ENCODE measurements at regions of chr6 and their contacts with region 1.

Region 1: DNA sequence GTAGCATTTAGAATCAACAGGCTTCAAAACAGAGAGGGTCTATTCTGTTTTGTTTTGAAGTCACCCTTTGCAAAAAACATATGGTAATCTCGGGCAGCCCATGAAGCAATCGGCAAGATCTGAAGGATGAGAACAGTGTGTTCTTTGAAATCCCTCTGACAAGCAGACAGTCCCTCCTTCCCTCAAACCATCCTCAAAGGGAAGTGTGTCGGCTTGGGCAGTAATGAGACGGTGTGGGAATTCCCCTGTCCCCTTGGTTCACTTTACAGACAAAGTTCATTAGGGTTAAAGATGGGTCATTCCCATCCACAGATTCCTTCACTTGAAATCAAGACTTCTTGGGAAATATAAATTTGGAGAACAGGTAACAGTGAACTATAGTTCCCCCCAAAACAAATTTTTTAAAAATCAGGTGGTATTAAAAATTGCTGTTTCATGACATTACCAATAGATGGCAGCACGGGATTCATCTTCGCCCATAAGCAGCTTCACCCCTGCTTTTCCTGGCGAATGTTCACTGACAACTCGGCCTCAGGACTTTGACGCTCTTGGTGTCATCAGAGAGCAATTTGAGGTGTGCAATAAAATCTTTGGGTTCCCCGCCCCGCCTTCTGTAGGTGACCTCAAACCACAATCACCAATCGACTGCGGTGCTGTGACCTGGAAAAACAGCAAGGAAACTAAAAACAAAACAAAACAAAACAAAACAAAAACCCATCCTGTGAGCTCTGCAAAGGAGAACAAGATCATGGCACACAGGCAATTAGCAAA is 159.3 kb upstream of the TNFAIP3 start:
- DNase-seq: no peak
- ATAC-seq: peak; percentile 86
- H3K4me3 ChIP-seq: peak overlapping the region; percentile 31
- H3K27ac ChIP-seq: peak overlapping the region; percentile 32
- H3K4me1 ChIP-seq: peaks cover 16% of the 10 kb centered on the region
- H3K27me3 ChIP-seq: no peaks in the 10 kb centered on the region
- CTCF ChIP-seq: peak; percentile 72

Region 2: DNA sequence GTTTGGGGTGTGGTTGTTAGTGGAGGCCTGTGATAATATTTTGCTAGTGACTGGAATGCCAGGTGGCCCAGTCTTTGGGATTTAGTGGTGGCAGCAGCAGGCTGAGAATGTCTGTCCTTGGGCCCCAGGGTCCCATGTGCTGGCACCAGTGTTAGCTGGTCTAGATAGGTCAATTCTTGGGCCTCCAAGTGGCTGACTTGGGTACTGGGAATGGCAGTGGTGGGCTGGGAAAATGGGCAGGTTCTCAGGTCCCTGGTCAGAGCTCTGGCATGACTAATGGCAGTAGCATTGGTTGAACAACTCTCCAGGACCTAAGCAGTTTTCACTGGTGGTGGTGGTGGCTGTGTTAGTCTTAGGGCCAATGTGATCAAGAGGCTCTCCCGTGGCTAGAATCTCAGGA is 263.9 kb before region 1 on chr6:
- intact Hi-C with region 1: no loop called
- DNase-seq: no peak
- ATAC-seq: no peak
- H3K4me3 ChIP-seq: no peak overlapping the region
- H3K27ac ChIP-seq: no peak overlapping the region
- H3K4me1 ChIP-seq: no peaks in the 10 kb centered on the region
- H3K27me3 ChIP-seq: no peaks in the 10 kb centered on the region
- CTCF ChIP-seq: no peak

Region 3: DNA sequence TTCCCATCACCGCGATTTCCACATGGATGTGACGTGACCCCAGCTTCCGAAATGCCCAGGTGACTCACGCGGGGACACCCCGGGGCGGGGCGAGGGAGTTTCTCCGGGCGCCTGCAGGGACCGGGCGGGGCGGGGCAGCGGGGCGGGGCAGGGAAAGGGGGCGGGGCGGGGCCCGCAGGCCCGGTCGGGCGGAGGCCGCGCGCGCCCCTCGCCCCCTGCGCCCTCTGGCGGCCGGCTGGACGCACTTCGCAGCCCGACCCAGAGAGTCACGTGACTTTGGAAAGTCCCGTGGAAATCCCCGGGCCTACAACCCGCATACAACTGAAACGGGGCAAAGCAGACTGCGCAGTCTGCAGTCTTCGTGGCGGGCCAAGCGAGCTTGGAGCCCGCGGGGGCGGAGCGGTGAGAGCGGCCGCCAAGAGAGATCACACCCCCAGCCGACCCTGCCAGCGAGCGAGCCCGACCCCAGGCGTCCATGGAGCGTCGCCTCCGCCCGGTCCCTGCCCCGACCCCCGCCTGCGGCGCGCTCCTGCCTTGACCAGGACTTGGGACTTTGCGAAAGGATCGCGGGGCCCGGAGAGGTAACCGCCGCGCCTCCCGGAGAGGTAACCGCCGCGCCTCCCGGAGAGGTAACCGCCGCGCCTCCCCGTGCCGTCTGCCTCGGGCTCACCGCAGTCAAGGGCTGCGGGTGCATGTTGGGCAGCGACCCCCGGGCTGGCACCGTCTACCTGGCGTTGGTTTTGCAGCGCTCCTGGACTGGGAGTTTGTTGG is 159.3 kb after region 1 on chr6 and contains the start of gene TNFAIP3:
- intact Hi-C with region 1: loop called (anchors 5 kb)
- DNase-seq: peak; percentile 97
- ATAC-seq: peak; percentile 96
- H3K4me3 ChIP-seq: peak within 1 kb of the TSS; percentile 96
- H3K27ac ChIP-seq: peak within 1 kb of the TSS; percentile 96
- H3K4me1 ChIP-seq: peaks cover 37% of the 10 kb centered on the region
- H3K27me3 ChIP-seq: no peaks in the 10 kb centered on the region
- CTCF ChIP-seq: peak; percentile 70
- total RNA-seq, gene TNFAIP3: 45.9 TPM

Region 4: GRCh38 chr6:137937834-137938233 is 230.1 kb after region 1 on chr6:
- intact Hi-C with region 1: loop called (anchors 5 kb)
- DNase-seq: no peak
- ATAC-seq: no peak
- H3K4me3 ChIP-seq: no peak overlapping the region
- H3K27ac ChIP-seq: no peak overlapping the region
- H3K4me1 ChIP-seq: no peaks in the 10 kb centered on the region
- H3K27me3 ChIP-seq: no peaks in the 10 kb centered on the region
- CTCF ChIP-seq: no peak

Measured in upper lobe of right lung (tissue), 1 donor.